ENCODE measurements at regions of chr9 and their contacts with region 1.

Region 1: DNA sequence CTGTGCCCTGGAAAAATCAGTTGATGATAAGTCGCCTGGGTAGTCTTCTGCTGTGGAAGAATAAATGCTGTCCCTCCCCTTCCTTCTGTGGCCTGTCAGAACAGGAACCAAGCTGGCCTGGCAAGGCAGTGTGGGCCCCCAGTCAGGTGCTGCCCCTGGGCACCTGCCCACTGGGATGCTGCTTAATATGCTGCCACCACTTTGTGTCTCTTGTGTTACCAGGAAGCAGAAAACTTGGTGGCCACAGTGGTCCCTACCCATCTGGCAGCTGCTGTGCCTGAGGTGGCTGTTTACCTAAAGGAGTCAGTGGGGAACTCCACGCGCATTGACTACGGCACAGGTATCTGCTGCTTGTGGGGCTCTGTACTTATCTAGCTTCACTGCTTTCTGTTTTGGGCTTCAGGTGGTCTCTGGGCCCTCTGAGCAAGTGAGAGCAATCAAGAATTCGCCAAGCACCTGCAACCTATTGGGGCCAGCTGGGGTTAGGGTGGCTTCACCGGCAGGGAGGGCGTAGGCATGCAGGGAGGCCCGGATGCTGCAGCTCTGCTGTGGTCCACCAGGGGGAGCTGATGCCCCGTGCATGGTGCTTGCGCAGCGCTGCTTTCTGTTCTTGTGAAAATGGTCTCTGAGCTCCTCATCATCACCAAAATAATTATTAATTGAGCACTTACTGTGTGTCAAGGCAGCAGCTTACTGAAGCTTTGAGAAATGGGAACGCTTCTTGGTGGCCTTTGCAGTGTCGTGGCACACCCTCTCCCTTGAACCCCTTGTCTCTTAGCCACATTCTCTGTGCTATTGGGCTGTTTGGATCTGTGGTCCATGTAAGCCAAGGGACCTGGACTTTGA is 20.3 kb downstream of the PTPA start:
- DNase-seq: peak in 1 of 2 experiments; percentile 97
- H3K4me3 ChIP-seq: no peak overlapping the region
- H3K27ac ChIP-seq: no peak overlapping the region
- H3K4me1 ChIP-seq: peaks cover 9 to 18% (median 11%) of the 10 kb centered on the region in 4 experiments; a peak in 6 of 7 replicates
- H3K27me3 ChIP-seq: no peaks in the 10 kb centered on the region
- CTCF ChIP-seq: peak; percentile 84 to 100 (median 99)
- EP300 ChIP-seq: no peak
- POLR2A ChIP-seq: no peak
- RAD21 ChIP-seq: peak; percentile 90 to 91

Region 2: GRCh38 chr9:129110740-129111527 is 20.6 kb before region 1 on chr9 and contains the starts of genes CRAT and PTPA:
- CTCF ChIA-PET with region 1: interaction called, 64 read pairs
- POLR2A ChIA-PET with region 1: interaction called, 21 read pairs
- DNase-seq: peak; percentile 84 to 93
- H3K4me3 ChIP-seq: peak within 1 kb of the TSS; percentile 75 to 95 (median 89)
- H3K27ac ChIP-seq: peak within 1 kb of the TSS; percentile 95
- H3K4me1 ChIP-seq: peaks cover 0 to 5% (median 3%) of the 10 kb centered on the region in 4 experiments; a peak in 3 of 7 replicates
- H3K27me3 ChIP-seq: peaks cover 0 to 15% (median 13%) of the 10 kb centered on the region in 4 experiments; a peak in 5 of 7 replicates
- CTCF ChIP-seq: no peak
- EP300 ChIP-seq: no peak
- POLR2A ChIP-seq: peak in 1 of 2 experiments; percentile 76; a peak in 2 of 3 replicates
- RAD21 ChIP-seq: no peak
- total RNA-seq, gene CRAT: 7.2 and 8.2 TPM in 2 replicates
- total RNA-seq, gene PTPA: 145 and 156 TPM in 2 replicates

Region 3: DNA sequence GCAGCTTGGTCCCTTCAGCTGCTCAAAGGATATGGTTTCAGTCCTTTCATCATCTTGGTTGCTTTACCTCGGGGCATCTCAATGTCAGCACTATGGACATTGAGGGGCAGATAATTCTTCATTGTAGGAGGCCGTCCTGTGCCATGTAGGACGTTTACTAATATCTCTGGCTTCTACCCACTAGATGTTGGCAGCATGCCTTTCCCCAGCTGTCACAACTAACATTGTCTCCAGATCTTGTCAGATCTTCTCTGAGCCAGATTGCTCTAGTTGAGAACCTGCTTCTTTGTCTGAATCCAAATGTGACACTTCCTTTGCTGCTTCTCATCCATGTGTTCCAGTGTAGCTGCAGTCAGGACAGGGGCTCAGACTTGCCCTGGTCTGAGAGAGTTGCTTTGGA is 10.0 kb before region 1 on chr9:
- CTCF ChIA-PET with region 1: interaction called, 169 read pairs
- POLR2A ChIA-PET with region 1: no interaction called
- DNase-seq: no peak
- H3K4me3 ChIP-seq: no peak overlapping the region
- H3K27ac ChIP-seq: no peak overlapping the region
- H3K4me1 ChIP-seq: peaks cover 0 to 8% (median 0%) of the 10 kb centered on the region in 4 experiments; a peak in 3 of 7 replicates
- H3K27me3 ChIP-seq: no peaks in the 10 kb centered on the region
- CTCF ChIP-seq: no peak
- EP300 ChIP-seq: no peak
- POLR2A ChIP-seq: no peak
- RAD21 ChIP-seq: no peak

Region 4: DNA sequence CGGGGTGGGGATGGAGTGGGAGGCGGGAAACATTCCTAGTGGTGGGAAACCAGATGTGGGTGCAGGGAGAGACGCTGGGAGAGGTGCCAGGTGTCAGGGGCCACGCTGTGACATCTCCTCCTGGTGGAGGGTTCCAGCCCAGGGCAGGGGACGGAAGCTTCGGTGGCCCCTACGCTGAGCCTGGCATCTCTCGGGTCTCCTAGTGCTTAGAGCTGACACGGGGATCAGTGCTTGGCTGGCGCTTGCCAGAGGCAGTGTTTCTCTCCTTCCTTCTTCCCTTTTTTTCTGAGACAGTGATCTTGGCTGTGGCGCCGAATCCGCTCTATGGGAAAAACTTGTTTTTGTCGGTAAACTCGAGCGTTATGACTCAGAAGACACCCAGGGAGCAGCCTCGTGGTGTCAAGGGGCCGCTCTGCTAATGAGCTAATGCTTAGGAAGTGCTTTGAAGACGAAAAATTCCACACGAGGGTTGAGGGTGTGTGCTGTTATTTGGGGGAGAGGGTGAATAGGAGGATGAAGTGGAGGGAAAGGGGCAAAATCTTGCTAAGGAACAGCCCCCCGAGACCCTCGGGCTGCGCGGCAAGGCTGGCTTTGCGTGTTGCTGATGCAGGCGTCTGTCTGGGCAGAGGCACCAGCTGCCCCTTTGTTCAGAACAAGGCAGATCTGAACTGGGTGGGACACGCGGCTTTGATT is 66.9 kb after region 1 on chr9:
- CTCF ChIA-PET with region 1: interaction called, 10 read pairs
- POLR2A ChIA-PET with region 1: no interaction called
- DNase-seq: no peak
- H3K4me3 ChIP-seq: no peak overlapping the region
- H3K27ac ChIP-seq: no peak overlapping the region
- H3K4me1 ChIP-seq: peaks cover 0 to 6% (median 3%) of the 10 kb centered on the region in 4 experiments; a peak in 4 of 7 replicates
- H3K27me3 ChIP-seq: peaks cover 0 to 19% (median 14%) of the 10 kb centered on the region in 4 experiments; a peak in 4 of 7 replicates
- CTCF ChIP-seq: no peak
- EP300 ChIP-seq: no peak
- POLR2A ChIP-seq: no peak
- RAD21 ChIP-seq: no peak

Region 5: GRCh38 chr9:129610473-129611301 is 479.2 kb after region 1 on chr9:
- CTCF ChIA-PET with region 1: interaction called, 18 read pairs
- POLR2A ChIA-PET with region 1: interaction called, 3 read pairs
- DNase-seq: peak in 1 of 2 experiments; percentile 96
- H3K4me3 ChIP-seq: peak overlapping the region; percentile 29 to 91 (median 63)
- H3K27ac ChIP-seq: no peak overlapping the region
- H3K4me1 ChIP-seq: peaks cover 0 to 21% (median 10%) of the 10 kb centered on the region in 4 experiments; a peak in 6 of 7 replicates
- H3K27me3 ChIP-seq: peaks cover 0 to 7% (median 4%) of the 10 kb centered on the region in 4 experiments; a peak in 5 of 7 replicates
- CTCF ChIP-seq: peak in 2 of 3 experiments; percentile 89 to 96; a peak in 3 of 4 replicates
- EP300 ChIP-seq: no peak
- POLR2A ChIP-seq: no peak
- RAD21 ChIP-seq: peak; percentile 90 to 95

Region 6: GRCh38 chr9:129617167-129617566 is 485.6 kb after region 1 on chr9:
- CTCF ChIA-PET with region 1: interaction called, 104 read pairs
- POLR2A ChIA-PET with region 1: no interaction called
- DNase-seq: no peak
- H3K4me3 ChIP-seq: no peak overlapping the region
- H3K27ac ChIP-seq: no peak overlapping the region
- H3K4me1 ChIP-seq: peaks cover 0 to 8% (median 2%) of the 10 kb centered on the region in 4 experiments; a peak in 3 of 7 replicates
- H3K27me3 ChIP-seq: peaks cover 18 to 36% (median 30%) of the 10 kb centered on the region in 4 experiments
- CTCF ChIP-seq: peak in 2 of 3 experiments; percentile 71 to 80; a peak in 3 of 4 replicates
- EP300 ChIP-seq: no peak
- POLR2A ChIP-seq: no peak
- RAD21 ChIP-seq: peak; percentile 78 to 85

Measured in H1 (cell line).